ENCODE measurements at regions of chr13 and their contacts with region 1.

Region 1: DNA sequence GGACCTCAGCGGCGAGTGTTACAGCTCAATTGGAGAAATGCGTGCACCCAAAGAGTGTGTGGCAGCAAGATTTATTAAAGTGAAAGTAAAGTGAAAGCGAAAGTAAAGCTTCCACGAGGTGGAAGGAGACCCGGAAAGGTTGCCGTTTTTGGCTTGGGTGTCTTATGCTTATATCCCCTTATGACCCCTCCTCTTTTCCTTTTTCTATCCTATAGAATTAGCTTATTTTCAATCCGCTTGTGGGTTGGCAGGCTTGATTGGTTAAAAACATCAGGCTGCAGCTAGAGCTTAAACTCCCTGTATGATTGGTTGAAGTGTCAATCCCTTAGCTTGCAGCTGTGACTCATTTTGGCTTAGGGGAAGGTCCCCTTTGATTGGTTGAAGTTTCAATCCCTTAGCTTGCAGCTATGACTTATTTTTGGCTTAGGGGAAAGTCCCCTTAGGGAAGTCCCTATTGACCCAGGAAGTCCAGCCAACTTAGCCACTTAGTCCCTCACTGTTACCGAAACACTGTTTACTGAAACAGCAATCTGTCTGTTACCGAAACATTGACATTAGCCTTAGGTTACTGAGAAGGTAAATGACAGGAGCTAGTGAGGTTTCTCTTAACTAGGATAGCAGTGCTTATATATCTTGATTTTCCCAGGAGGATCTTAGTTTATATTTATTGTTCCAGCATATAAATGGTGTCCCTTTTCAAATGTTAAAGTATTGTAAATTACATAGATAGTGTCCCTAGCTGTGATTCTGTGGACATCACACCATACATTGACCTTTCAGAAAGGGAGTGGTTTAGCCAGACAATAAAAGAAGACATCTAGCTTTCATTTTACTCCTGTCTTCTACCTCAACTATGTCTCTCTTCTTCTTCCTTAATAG is 575.8 kb downstream of the DACH1 start:
- DNase-seq: peak in 33 of 35 experiments; percentile 12 to 73 (median 48)
- ATAC-seq: peak; percentile 54 to 80 (median 62)
- H3K4me3 ChIP-seq: peak overlapping the region; percentile 45 to 46
- H3K4me3 Mint-ChIP-seq: peak overlapping the region; percentile 67 to 86 (median 80)
- H3K27ac ChIP-seq: peak overlapping the region; percentile 93
- H3K27ac Mint-ChIP-seq: peak overlapping the region; percentile 90 to 94
- H3K4me1 ChIP-seq: no peaks in the 10 kb centered on the region
- H3K4me1 Mint-ChIP-seq: peaks cover 0 to 31% (median 28%) of the 10 kb centered on the region in 3 donors
- H3K27me3 ChIP-seq: peaks cover 0 to 3% of the 10 kb centered on the region in 2 experiments
- H3K27me3 Mint-ChIP-seq: peaks cover 5 to 11% of the 10 kb centered on the region in 2 donors

Region 2: GRCh38 chr13:71350886-71351285 is 59.7 kb after region 1 on chr13:
- CTCF ChIA-PET with region 1: interaction called in 1 of 2 experiments, 10 read pairs
- POLR2A ChIA-PET with region 1: no interaction called
- DNase-seq: no peak
- ATAC-seq: no peak
- H3K4me3 ChIP-seq: no peak overlapping the region
- H3K4me3 Mint-ChIP-seq: no peak overlapping the region
- H3K27ac ChIP-seq: no peak overlapping the region
- H3K27ac Mint-ChIP-seq: no peak overlapping the region
- H3K4me1 ChIP-seq: no peaks in the 10 kb centered on the region
- H3K4me1 Mint-ChIP-seq: no peaks in the 10 kb centered on the region
- H3K27me3 ChIP-seq: no peaks in the 10 kb centered on the region
- H3K27me3 Mint-ChIP-seq: no peaks in the 10 kb centered on the region

Region 3: DNA sequence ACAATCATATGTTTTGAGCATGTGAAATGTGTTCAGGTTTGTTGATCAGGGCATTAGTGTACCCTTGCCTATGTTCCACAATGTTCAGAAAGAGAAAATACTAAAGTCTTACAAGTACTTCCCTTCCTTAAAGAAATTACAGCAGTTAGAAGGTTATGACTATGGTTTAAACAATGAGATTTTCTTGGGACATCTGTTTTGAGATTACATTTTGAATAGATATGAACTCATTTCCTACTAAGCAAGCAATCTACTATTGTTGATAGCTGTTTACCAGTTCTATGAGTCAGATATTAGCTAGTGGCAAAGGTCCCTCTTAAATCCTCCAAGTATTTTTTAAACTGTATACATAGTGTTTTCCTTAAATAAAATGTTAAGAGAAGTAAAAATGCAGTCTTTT is 334.5 kb after region 1 on chr13:
- CTCF ChIA-PET with region 1: no interaction called
- POLR2A ChIA-PET with region 1: no interaction called
- DNase-seq: no peak
- ATAC-seq: no peak
- H3K4me3 ChIP-seq: no peak overlapping the region
- H3K4me3 Mint-ChIP-seq: no peak overlapping the region
- H3K27ac ChIP-seq: no peak overlapping the region
- H3K27ac Mint-ChIP-seq: no peak overlapping the region
- H3K4me1 ChIP-seq: no peaks in the 10 kb centered on the region
- H3K4me1 Mint-ChIP-seq: no peaks in the 10 kb centered on the region
- H3K27me3 ChIP-seq: no peaks in the 10 kb centered on the region
- H3K27me3 Mint-ChIP-seq: no peaks in the 10 kb centered on the region

Measured in T-cell (primary cell).